ENCODE measurements at regions of chr17 and their contacts with region 1.

Region 1: DNA sequence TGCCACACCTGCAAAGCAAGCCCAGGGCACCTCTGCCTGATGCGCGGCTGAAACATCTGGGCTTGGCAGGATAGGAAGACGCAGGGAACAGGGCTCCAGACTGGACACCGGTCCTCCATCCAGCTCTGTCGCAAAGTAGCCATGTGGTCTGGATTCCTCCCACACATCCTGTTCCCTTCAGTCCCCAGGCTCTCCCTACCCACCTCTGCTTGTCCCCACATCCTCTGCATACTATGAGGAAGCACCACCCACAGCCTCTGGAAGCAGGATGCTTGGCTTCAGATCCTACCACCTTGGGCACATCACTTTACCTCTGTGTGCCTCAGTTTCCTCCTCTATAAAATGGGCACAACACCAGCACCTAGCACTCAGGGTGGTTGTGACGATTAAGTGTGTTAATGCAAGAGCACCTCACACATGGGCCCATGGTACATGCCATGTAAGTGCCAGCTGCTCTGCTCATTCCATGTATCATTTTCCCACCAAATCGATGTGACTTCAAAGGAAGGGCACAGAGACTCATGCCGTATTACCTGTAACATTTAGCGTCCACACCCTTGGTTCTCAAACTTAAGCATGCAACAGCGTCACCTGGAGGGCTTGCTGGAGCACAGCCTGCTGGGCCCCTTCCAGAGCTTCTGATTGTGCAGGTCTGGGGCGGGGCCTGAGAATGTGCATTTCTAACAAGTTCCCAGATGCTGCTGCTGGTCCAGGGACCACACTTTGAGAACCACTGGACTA is 138.6 kb upstream of the SDK2 start:
- DNase-seq: peak; percentile 74
- ATAC-seq: peak; percentile 87
- H3K4me3 ChIP-seq: no peak overlapping the region
- H3K27ac ChIP-seq: no peak overlapping the region
- H3K4me1 ChIP-seq: peaks cover 0 to 8% of the 10 kb centered on the region in 2 experiments; a peak in 2 of 4 replicates
- H3K27me3 ChIP-seq: peaks cover 61% of the 10 kb centered on the region; the same call in 1 of the 2 replicates
- CTCF ChIP-seq: peak; percentile 73 to 96 (median 91)
- POLR2A ChIP-seq: no peak
- RAD21 ChIP-seq: peak; percentile 86

Region 2: GRCh38 chr17:73420895-73421294 is 361.9 kb before region 1 on chr17:
- CTCF ChIA-PET with region 1: no interaction called
- POLR2A ChIA-PET with region 1: no interaction called
- RAD21 ChIA-PET with region 1: no interaction called
- intact Hi-C with region 1: loop called (anchors 2 kb)
- DNase-seq: peak; percentile 77
- ATAC-seq: peak; percentile 98
- H3K4me3 ChIP-seq: no peak overlapping the region
- H3K27ac ChIP-seq: no peak overlapping the region
- H3K4me1 ChIP-seq: peaks cover 6 to 15% of the 10 kb centered on the region in 2 experiments; a peak in 3 of 4 replicates
- H3K27me3 ChIP-seq: no peaks in the 10 kb centered on the region
- CTCF ChIP-seq: peak; percentile 28 to 80 (median 68); a peak in 5 of 6 replicates
- POLR2A ChIP-seq: no peak
- RAD21 ChIP-seq: peak; percentile 64

Region 3: GRCh38 chr17:73798111-73798748 is 15.4 kb after region 1 on chr17:
- CTCF ChIA-PET with region 1: no interaction called
- POLR2A ChIA-PET with region 1: no interaction called
- RAD21 ChIA-PET with region 1: no interaction called
- intact Hi-C with region 1: no loop called
- DNase-seq: no peak
- ATAC-seq: no peak
- H3K4me3 ChIP-seq: no peak overlapping the region
- H3K27ac ChIP-seq: no peak overlapping the region
- H3K4me1 ChIP-seq: peaks cover 4 to 9% of the 10 kb centered on the region in 2 experiments; a peak in 2 of 4 replicates
- H3K27me3 ChIP-seq: peaks cover 54% of the 10 kb centered on the region
- CTCF ChIP-seq: no peak
- POLR2A ChIP-seq: no peak
- RAD21 ChIP-seq: no peak